Natural killer cell (primary cell): ENCODE measurements at regions of chr17 and their contacts with region 1.

Region 1: GRCh38 chr17:73156166-73156840 is 8.5 kb upstream of the SSTR2 start:
- DNase-seq: peak; percentile 36 to 66
- ATAC-seq: peak; percentile 74 to 95 (median 87)
- H3K4me3 ChIP-seq: no peak overlapping the region
- H3K4me3 Mint-ChIP-seq: no peak overlapping the region
- H3K27ac ChIP-seq: no peak overlapping the region
- H3K27ac Mint-ChIP-seq: peak overlapping the region in 1 of 2 donors; percentile 9
- H3K4me1 ChIP-seq: peaks cover 3% of the 10 kb centered on the region
- H3K4me1 Mint-ChIP-seq: peaks cover 0 to 6% of the 10 kb centered on the region in 2 donors
- H3K27me3 ChIP-seq: no peaks in the 10 kb centered on the region
- H3K27me3 Mint-ChIP-seq: peaks cover 15 to 22% of the 10 kb centered on the region in 2 donors
- CTCF ChIP-seq: peak; percentile 63

Region 2: GRCh38 chr17:72560303-72561247 is 595.7 kb before region 1 on chr17:
- intact Hi-C with region 1: loop called (anchors 1 kb)
- DNase-seq: peak in 1 of 2 donors; percentile 76
- ATAC-seq: peak; percentile 54 to 85 (median 67)
- H3K4me3 ChIP-seq: no peak overlapping the region
- H3K4me3 Mint-ChIP-seq: no peak overlapping the region
- H3K27ac ChIP-seq: no peak overlapping the region
- H3K27ac Mint-ChIP-seq: no peak overlapping the region
- H3K4me1 ChIP-seq: no peaks in the 10 kb centered on the region
- H3K4me1 Mint-ChIP-seq: no peaks in the 10 kb centered on the region
- H3K27me3 ChIP-seq: no peaks in the 10 kb centered on the region
- H3K27me3 Mint-ChIP-seq: no peaks in the 10 kb centered on the region
- CTCF ChIP-seq: peak; percentile 80

Region 3: GRCh38 chr17:72725433-72726068 is 430.8 kb before region 1 on chr17:
- intact Hi-C with region 1: loop called (anchors 1 kb)
- DNase-seq: peak in 1 of 2 donors; percentile 71
- ATAC-seq: peak in 2 of 3 donors; percentile 49 to 67
- H3K4me3 ChIP-seq: no peak overlapping the region
- H3K4me3 Mint-ChIP-seq: peak overlapping the region; percentile 55
- H3K27ac ChIP-seq: no peak overlapping the region
- H3K27ac Mint-ChIP-seq: peak overlapping the region; percentile 6 to 46
- H3K4me1 ChIP-seq: peaks cover 19% of the 10 kb centered on the region
- H3K4me1 Mint-ChIP-seq: peaks cover 16 to 31% of the 10 kb centered on the region in 2 donors
- H3K27me3 ChIP-seq: no peaks in the 10 kb centered on the region
- H3K27me3 Mint-ChIP-seq: no peaks in the 10 kb centered on the region
- CTCF ChIP-seq: peak; percentile 69

Region 4: DNA sequence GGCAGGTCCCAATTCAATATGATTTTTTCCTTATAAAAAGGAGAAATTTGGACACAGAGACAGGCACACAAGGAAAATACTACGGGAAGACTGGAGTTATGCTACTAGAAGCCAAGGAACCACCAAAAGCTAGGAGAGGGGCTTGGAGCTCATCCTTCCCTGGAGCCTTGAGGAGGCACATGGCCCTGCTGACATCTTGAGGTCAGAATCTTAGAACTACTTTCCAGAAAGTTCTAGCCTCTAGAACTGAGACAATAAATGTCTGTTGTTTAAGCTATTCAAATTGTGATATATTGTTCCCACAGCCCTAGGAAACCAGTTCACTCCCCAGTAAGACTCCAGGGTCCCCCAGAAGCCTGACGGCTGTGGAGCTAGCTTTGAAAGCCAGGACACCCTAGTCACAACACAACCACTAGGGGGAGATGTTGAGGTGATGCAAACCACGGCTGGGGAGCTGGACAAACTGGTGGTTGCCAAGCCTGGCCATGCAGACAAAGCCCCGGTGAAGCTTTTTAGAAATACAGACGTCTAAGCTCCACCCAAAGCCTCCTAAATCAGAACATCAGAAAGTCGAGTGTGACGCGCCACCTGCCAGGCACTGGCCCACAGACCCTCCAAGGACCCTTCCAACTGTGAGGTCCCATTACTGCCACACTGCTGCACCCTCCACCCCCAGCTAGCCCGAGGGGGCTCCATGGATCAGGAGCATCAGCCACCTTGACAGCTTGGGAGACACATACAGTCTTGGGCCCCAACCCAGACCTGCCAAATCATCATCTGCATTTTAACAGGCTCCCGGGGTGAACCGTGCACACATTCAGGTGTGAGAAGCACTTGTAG is 170.2 kb before region 1 on chr17:
- intact Hi-C with region 1: loop called (anchors 5 kb)
- DNase-seq: peak; percentile 21 to 73
- ATAC-seq: peak; percentile 64 to 85 (median 75)
- H3K4me3 ChIP-seq: no peak overlapping the region
- H3K4me3 Mint-ChIP-seq: no peak overlapping the region
- H3K27ac ChIP-seq: no peak overlapping the region
- H3K27ac Mint-ChIP-seq: no peak overlapping the region
- H3K4me1 ChIP-seq: peaks cover 5% of the 10 kb centered on the region
- H3K4me1 Mint-ChIP-seq: peaks cover 16 to 21% of the 10 kb centered on the region in 2 donors
- H3K27me3 ChIP-seq: no peaks in the 10 kb centered on the region
- H3K27me3 Mint-ChIP-seq: no peaks in the 10 kb centered on the region
- CTCF ChIP-seq: peak; percentile 69

Region 5: DNA sequence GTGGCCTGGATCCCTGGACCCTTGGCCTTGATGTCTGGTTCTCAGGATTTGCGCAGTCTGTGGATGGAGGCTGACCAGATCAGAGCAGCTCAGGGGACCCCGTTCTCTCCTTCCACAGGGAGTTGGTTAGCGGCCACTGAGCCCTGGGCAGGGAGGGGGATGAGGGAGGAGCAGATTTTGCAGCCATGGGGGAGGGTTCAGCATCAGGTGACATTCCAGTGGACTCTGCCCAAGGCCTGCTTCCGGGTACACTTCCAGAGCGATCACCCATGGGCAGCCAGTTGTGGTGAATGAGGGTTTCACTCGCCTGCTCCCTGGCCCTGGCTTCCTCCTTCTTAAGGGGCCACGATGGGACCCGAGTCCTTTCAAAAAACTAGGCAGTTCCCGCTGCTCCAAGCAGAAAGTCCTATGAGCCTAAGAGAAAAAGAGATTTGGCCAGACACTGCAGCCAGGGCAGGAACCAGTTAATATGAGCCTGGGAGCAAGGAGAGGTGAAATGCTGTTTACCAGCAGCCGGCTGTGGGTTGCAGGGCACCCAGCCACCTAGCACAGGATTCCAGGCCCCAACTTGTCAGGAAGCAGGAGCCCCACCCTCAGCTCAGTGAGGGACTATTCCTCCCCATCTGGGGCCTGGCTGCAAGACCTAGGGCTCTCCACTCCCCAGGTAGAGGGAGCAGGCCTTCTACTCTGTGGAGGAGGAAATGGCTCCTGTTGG is 1270.9 kb after region 1 on chr17:
- intact Hi-C with region 1: no loop called
- DNase-seq: no peak
- ATAC-seq: no peak
- H3K4me3 ChIP-seq: no peak overlapping the region
- H3K4me3 Mint-ChIP-seq: no peak overlapping the region
- H3K27ac ChIP-seq: no peak overlapping the region
- H3K27ac Mint-ChIP-seq: no peak overlapping the region
- H3K4me1 ChIP-seq: peaks cover 21% of the 10 kb centered on the region
- H3K4me1 Mint-ChIP-seq: peaks cover 7 to 17% of the 10 kb centered on the region in 2 donors
- H3K27me3 ChIP-seq: peaks cover 16% of the 10 kb centered on the region
- H3K27me3 Mint-ChIP-seq: peaks cover 9 to 34% of the 10 kb centered on the region in 2 donors
- CTCF ChIP-seq: no peak